Right cardiac atrium (tissue), 5 donors: ENCODE measurements at regions of chr2 and their contacts with region 1.

Region 1: GRCh38 chr2:42944779-42945415 is 152.5 kb upstream of the HAAO start:
- DNase-seq: peak in 1 of 3 donors; percentile 45
- ATAC-seq: no peak
- H3K4me3 ChIP-seq: no peak overlapping the region
- H3K27ac ChIP-seq: no peak overlapping the region
- H3K4me1 ChIP-seq: no peaks in the 10 kb centered on the region
- H3K27me3 ChIP-seq: no peaks in the 10 kb centered on the region

Region 2: DNA sequence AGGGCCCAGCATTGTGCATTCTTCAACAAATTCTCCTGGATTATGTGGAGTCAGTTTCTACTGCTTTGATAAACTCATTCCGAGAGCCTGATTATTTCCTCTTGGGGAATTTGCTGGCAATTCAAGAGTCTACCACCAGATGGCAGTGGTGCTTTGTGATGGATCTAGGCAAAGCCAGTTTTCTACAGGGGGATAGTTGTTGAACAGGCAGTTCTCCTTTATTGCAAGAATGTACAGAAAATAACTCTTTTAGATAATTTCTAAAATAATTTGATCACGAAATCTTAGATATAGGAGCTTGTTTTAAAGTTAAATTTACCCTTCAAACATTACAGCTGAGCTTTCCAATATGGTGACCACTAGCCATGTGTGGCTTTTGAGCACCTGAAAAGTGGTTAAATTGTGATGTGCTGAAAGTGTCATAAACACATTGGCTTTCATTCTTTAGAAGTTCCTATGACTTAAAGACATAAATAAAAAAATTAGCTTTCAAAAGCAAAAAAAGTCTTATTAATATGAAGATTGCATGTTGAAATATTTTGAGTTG is 85.8 kb before region 1 on chr2:
- intact Hi-C with region 1: loop called in 1 of 4 experiments (anchors 5 kb)
- DNase-seq: no peak
- ATAC-seq: no peak
- H3K4me3 ChIP-seq: no peak overlapping the region
- H3K27ac ChIP-seq: no peak overlapping the region
- H3K4me1 ChIP-seq: peaks cover 6% of the 10 kb centered on the region
- H3K27me3 ChIP-seq: no peaks in the 10 kb centered on the region